GM12878 (cell line): ENCODE measurements at regions of chr11 and their contacts with region 1.

Region 1: DNA sequence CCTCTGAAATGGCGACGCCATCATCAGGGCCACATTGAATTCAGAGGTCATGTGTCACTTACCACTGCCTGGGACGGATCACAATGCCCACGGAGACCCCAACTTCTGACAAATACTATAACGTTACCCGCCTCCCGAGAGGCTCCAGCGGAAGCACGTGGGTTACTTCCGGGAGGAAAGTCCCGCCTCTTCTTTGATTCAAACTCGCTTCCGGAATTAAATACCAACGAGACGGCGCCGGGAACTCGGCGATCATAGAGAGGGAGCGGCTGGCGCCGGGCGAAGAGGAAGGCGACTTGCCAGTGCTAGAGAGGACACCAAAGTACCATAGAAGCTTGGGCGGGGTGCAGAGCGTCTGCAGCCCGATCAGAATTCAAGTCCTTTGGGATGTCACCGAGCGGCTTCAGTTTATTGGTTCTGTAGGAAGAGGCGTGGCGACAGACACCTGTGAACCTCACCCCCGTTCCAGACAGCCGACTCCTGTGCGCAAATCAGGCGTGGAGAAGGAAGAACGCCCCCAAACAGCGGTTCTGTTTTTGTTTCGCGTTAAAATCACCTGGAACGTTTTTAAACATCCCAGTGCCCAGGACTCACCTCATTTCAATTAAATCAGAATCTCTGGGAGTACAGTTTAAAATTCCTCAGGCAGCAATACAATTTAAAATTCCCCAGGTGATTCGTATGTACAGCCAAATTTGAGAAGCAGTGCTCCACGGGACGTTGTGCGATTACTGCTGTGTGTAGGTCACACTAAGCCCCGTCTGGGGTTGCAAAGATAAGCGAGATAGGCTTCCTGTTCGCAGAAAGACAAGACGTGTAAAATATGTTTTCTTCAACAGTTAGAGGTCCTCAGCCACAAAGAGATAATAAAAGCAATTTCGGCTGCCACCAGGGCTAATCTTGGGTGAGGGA is at the start of gene TIMM10:
- DNase-seq: peak; percentile 95
- ATAC-seq: peak; percentile 97
- H3K4me3 ChIP-seq: peak within 1 kb of the TSS; percentile 85
- H3K27ac ChIP-seq: peak within 1 kb of the TSS; percentile 88
- H3K4me1 ChIP-seq: peaks cover 16% of the 10 kb centered on the region
- H3K27me3 ChIP-seq: no peaks in the 10 kb centered on the region
- CTCF ChIP-seq: no peak
- EP300 ChIP-seq: peak; percentile 21 to 35; a peak in 2 of 4 replicates
- POLR2A ChIP-seq: peak; percentile 79
- RAD21 ChIP-seq: no peak
- polyA plus RNA-seq, gene TIMM10: 770 to 898 TPM

Region 2: GRCh38 chr11:57426929-57427726 is 103.7 kb before region 1 on chr11 and contains the start of gene SLC43A3:
- CTCF ChIA-PET with region 1: interaction called, 15 read pairs
- POLR2A ChIA-PET with region 1: no interaction called
- RAD21 ChIA-PET with region 1: interaction called, 3 read pairs
- SMC1A ChIA-PET with region 1: interaction called, 4 read pairs
- in situ Hi-C with region 1: no loop called
- intact Hi-C with region 1: no loop called
- DNase-seq: peak; percentile 41
- ATAC-seq: peak; percentile 80
- H3K4me3 ChIP-seq: peak within 1 kb of the TSS; percentile 88
- H3K27ac ChIP-seq: peak within 1 kb of the TSS; percentile 97
- H3K4me1 ChIP-seq: peaks cover 31% of the 10 kb centered on the region
- H3K27me3 ChIP-seq: no peaks in the 10 kb centered on the region
- CTCF ChIP-seq: no peak
- EP300 ChIP-seq: 0 out of 4 replicates have a peak, but pooled peaks of 1 of the 2 experiments have one; percentile 16
- POLR2A ChIP-seq: peak; percentile 90
- RAD21 ChIP-seq: no peak
- polyA plus RNA-seq, gene SLC43A3: 37.5 to 79.9 TPM

Region 3: GRCh38 chr11:57480409-57481137 is 50.3 kb before region 1 on chr11:
- CTCF ChIA-PET with region 1: interaction called, 112 read pairs
- POLR2A ChIA-PET with region 1: interaction called, 3 read pairs
- RAD21 ChIA-PET with region 1: interaction called, 5 read pairs
- SMC1A ChIA-PET with region 1: interaction called, 7 read pairs
- in situ Hi-C with region 1: no loop called
- intact Hi-C with region 1: no loop called
- DNase-seq: no peak
- ATAC-seq: peak; percentile 48
- H3K4me3 ChIP-seq: no peak overlapping the region
- H3K27ac ChIP-seq: no peak overlapping the region
- H3K4me1 ChIP-seq: peaks cover 26% of the 10 kb centered on the region
- H3K27me3 ChIP-seq: no peaks in the 10 kb centered on the region
- CTCF ChIP-seq: peak; percentile 71 to 91 (median 86)
- EP300 ChIP-seq: no peak
- POLR2A ChIP-seq: no peak
- RAD21 ChIP-seq: peak; percentile 59

Region 4: GRCh38 chr11:57515332-57516060 is 15.4 kb before region 1 on chr11 and contains the start of gene SLC43A1:
- CTCF ChIA-PET with region 1: interaction called, 129 read pairs
- POLR2A ChIA-PET with region 1: interaction called, 5 read pairs
- RAD21 ChIA-PET with region 1: interaction called, 7 read pairs
- SMC1A ChIA-PET with region 1: interaction called, 34 read pairs
- in situ Hi-C with region 1: no loop called
- intact Hi-C with region 1: no loop called
- DNase-seq: no peak
- ATAC-seq: peak; percentile 66
- H3K4me3 ChIP-seq: peak within 1 kb of the TSS; percentile 90
- H3K27ac ChIP-seq: peak within 1 kb of the TSS; percentile 35
- H3K4me1 ChIP-seq: no peaks in the 10 kb centered on the region
- H3K27me3 ChIP-seq: no peaks in the 10 kb centered on the region
- CTCF ChIP-seq: no peak
- EP300 ChIP-seq: no peak
- POLR2A ChIP-seq: peak; percentile 25; the same call in 1 of the 2 replicates
- RAD21 ChIP-seq: no peak
- polyA plus RNA-seq, gene SLC43A1: 1.0 to 2.4 TPM

Region 5: GRCh38 chr11:57567515-57568329 is 36.9 kb after region 1 on chr11 and contains the start of gene UBE2L6:
- CTCF ChIA-PET with region 1: interaction called, 9 read pairs
- POLR2A ChIA-PET with region 1: interaction called, 7 read pairs
- RAD21 ChIA-PET with region 1: interaction called, 4 read pairs
- SMC1A ChIA-PET with region 1: interaction called, 9 read pairs
- in situ Hi-C with region 1: no loop called
- intact Hi-C with region 1: loop called (anchors 1 kb)
- DNase-seq: no peak
- ATAC-seq: peak; percentile 84
- H3K4me3 ChIP-seq: peak within 1 kb of the TSS; percentile 100
- H3K27ac ChIP-seq: peak within 1 kb of the TSS; percentile 87
- H3K4me1 ChIP-seq: peaks cover 4% of the 10 kb centered on the region
- H3K27me3 ChIP-seq: no peaks in the 10 kb centered on the region
- CTCF ChIP-seq: peak in 2 of 3 experiments; percentile 43 to 66; a peak in 3 of 6 replicates
- EP300 ChIP-seq: no peak
- POLR2A ChIP-seq: peak; percentile 59
- RAD21 ChIP-seq: no peak
- polyA plus RNA-seq, gene UBE2L6: 262 to 295 TPM

Region 6: GRCh38 chr11:57819252-57819979 is 288.6 kb after region 1 on chr11:
- CTCF ChIA-PET with region 1: no interaction called
- POLR2A ChIA-PET with region 1: no interaction called
- RAD21 ChIA-PET with region 1: no interaction called
- SMC1A ChIA-PET with region 1: no interaction called
- in situ Hi-C with region 1: no loop called
- intact Hi-C with region 1: no loop called
- DNase-seq: no peak
- ATAC-seq: no peak
- H3K4me3 ChIP-seq: no peak overlapping the region
- H3K27ac ChIP-seq: no peak overlapping the region
- H3K4me1 ChIP-seq: peaks cover 10% of the 10 kb centered on the region; the same call in 1 of the 2 replicates
- H3K27me3 ChIP-seq: no peaks in the 10 kb centered on the region
- CTCF ChIP-seq: no peak
- EP300 ChIP-seq: no peak
- POLR2A ChIP-seq: no peak
- RAD21 ChIP-seq: no peak